Heart left ventricle (tissue), 16 donors: ENCODE measurements at regions of chr1 and their contacts with region 1.

Region 1: DNA sequence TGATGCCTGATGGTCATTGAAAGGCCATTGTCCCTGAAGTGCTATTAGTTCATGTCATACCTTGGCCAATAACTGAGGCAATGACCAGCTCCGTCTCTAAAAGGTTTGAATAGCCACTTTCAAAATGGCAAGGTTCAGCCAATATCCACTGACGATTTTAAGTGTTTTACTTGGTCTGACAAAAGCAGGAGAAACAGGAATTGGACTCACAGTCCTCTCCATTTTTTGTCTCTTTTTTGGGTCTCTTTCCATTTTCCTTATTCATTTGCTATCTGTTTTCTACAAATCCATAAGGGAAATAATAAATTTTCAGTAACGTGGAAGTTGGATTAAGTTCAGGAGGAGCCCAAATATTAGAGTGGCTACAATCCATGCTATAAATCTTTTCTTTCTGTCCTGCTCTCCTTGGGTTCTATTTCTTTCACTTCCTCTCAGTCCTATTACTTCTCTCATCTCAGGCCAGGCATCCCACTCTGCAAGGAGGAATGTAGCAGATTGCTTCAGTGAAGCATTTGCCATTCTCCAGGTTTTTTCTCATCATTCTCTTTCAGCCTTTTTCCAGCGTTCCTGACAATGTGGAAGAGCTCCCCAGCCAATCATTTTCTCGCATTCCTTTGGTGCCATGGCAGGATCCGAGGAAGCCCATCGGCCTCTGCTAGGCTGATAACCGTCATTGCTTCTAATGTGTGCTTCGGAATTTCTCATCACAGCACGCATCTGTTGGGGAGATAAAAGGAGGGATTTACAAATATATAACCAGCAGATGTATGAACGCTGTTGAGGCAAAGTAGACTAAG is 414.5 kb downstream of the ADGRL2 start:
- DNase-seq: no peak
- ATAC-seq: no peak
- H3K4me3 ChIP-seq: no peak overlapping the region
- H3K27ac ChIP-seq: no peak overlapping the region
- H3K4me1 ChIP-seq: peaks cover 0 to 14% (median 0%) of the 10 kb centered on the region in 12 donors
- H3K27me3 ChIP-seq: no peaks in the 10 kb centered on the region
- CTCF ChIP-seq: no peak
- POLR2A ChIP-seq: no peak

Region 2: GRCh38 chr1:82230667-82231066 is 15.4 kb after region 1 on chr1:
- intact Hi-C with region 1: loop called in 1 of 10 experiments (anchors 2 kb)
- DNase-seq: no peak
- ATAC-seq: no peak
- H3K4me3 ChIP-seq: no peak overlapping the region
- H3K27ac ChIP-seq: no peak overlapping the region
- H3K4me1 ChIP-seq: peaks cover 0 to 27% (median 5%) of the 10 kb centered on the region in 12 donors
- H3K27me3 ChIP-seq: no peaks in the 10 kb centered on the region
- CTCF ChIP-seq: no peak
- POLR2A ChIP-seq: no peak